Sigmoid colon (tissue), 7 donors: ENCODE measurements at regions of chr1 and their contacts with region 1.

Region 1: DNA sequence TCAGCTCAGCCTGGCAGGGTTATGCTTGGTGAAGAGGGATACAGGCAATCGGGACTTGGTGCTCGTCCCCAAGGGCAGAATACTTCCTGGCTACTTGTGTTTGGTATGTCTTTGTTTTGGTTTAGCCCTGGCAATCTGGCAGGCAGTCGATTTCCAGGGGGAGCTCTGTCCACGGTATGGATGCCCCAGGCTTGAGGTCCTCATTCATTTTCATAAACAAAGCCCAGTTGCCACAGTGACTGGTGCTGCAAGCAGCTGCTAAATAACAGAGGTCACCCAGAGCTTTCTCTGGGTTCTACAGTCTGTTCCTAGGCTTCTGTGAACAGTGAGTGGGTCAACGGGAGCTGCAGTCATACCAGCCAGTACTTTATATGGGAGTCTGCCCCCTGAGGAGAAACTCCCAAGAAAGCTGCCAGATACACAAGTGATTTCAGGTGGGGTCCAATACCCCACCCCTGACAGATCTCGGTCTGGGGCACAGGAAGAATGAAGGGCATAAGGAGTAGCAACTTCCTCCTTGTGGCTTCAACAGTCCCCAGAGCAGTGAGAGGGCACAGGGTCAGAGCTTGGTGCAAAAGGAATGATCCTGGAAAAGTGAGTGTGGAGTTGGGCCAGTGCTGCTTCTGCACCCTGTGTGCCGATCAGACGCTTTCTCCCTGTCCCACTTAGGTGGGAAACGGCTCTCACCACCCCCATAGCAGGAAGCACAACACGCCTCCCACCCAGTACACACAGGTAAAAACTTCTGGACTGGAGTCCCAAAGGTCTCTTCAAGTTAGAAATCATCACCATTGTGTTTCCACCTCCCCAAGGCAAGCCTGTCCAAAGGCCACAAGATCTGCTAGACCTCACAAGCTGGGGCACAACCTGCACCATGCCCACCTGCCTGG is 55.5 kb downstream of the TGFBR3 start:
- DNase-seq: peak; percentile 85
- H3K4me3 ChIP-seq: no peak overlapping the region
- H3K27ac ChIP-seq: peak overlapping the region; percentile 64 to 81 (median 79)
- H3K4me1 ChIP-seq: peaks cover 0 to 83% (median 70%) of the 10 kb centered on the region in 4 donors
- H3K27me3 ChIP-seq: no peaks in the 10 kb centered on the region
- CTCF ChIP-seq: peak in 1 of 4 experiments; percentile 23
- EP300 ChIP-seq: peak in 1 of 4 donors; percentile 72
- POLR2A ChIP-seq: no peak

Region 2: DNA sequence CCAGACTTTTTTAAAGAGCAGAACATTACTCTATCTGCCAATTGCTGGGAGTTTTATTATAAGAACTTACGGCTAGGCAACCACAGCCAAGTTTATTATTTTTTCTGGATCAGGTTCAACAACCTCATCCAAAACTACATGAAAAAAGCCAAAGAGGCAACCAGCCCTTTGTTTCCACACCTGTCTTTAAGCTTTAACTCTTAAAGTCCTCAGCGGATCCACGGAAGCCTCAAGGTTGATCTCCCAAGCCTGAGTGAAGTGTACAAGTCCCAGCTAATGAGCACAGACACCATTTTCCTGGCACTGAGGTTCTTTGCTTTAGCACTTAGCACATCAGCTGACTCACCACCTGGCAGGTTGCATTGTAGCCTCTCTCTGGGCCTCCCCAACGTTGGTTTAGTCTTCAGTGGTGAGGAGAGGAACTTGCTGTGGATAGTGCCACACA is 87.6 kb before region 1 on chr1:
- intact Hi-C with region 1: loop called (anchors 5 kb)
- DNase-seq: peak; percentile 91
- H3K4me3 ChIP-seq: no peak overlapping the region
- H3K27ac ChIP-seq: peak overlapping the region; percentile 73 to 80 (median 76)
- H3K4me1 ChIP-seq: peaks cover 0 to 65% (median 56%) of the 10 kb centered on the region in 4 donors
- H3K27me3 ChIP-seq: no peaks in the 10 kb centered on the region
- CTCF ChIP-seq: no peak
- EP300 ChIP-seq: peak in 1 of 4 donors; percentile 22
- POLR2A ChIP-seq: no peak

Region 3: GRCh38 chr1:91791103-91791502 is 39.4 kb before region 1 on chr1:
- intact Hi-C with region 1: loop called (anchors 5 kb)
- DNase-seq: no peak
- H3K4me3 ChIP-seq: no peak overlapping the region
- H3K27ac ChIP-seq: peak overlapping the region; percentile 45 to 80 (median 75)
- H3K4me1 ChIP-seq: peaks cover 0 to 80% (median 75%) of the 10 kb centered on the region in 4 donors
- H3K27me3 ChIP-seq: no peaks in the 10 kb centered on the region
- CTCF ChIP-seq: no peak
- EP300 ChIP-seq: no peak
- POLR2A ChIP-seq: no peak